ENCODE measurements at regions of chr12 and their contacts with region 1.

Region 1: DNA sequence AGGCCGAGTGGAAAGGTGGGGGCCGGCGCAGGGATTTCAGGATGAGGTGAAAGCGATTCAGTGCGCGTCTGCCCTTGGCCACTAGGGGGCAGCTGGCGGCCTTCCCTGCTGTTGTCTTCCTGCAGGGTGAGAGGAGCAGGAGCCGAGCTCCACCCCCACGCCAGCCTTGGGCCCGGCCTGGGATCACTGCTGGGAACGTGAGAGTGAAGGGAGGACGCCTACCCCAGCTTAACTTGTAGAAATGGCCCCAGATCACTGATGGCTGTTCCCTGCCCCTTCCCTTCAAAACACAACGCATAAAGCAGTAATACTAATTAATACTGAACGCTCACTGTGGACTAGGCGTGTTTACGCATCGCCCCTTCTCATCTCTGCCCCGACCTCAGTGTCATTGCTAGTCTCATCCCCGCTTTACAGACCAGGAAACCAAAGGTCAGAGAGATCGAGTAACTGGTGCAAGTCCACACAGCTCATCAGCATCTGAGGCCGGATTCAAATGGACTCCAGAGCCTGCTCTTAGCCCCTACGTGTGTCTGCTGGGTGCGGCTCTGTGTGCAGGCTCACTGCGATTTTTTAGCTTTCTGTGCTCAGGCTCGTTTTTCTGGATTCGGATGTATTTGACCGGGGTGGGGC is 24.3 kb downstream of the MVK start:
- DNase-seq: peak; percentile 80
- H3K4me3 ChIP-seq: no peak overlapping the region
- H3K27ac ChIP-seq: no peak overlapping the region
- H3K4me1 ChIP-seq: no peaks in the 10 kb centered on the region
- H3K27me3 ChIP-seq: no peaks in the 10 kb centered on the region
- CTCF ChIP-seq: peak; percentile 95 to 97 (median 96)
- POLR2A ChIP-seq: no peak

Region 2: DNA sequence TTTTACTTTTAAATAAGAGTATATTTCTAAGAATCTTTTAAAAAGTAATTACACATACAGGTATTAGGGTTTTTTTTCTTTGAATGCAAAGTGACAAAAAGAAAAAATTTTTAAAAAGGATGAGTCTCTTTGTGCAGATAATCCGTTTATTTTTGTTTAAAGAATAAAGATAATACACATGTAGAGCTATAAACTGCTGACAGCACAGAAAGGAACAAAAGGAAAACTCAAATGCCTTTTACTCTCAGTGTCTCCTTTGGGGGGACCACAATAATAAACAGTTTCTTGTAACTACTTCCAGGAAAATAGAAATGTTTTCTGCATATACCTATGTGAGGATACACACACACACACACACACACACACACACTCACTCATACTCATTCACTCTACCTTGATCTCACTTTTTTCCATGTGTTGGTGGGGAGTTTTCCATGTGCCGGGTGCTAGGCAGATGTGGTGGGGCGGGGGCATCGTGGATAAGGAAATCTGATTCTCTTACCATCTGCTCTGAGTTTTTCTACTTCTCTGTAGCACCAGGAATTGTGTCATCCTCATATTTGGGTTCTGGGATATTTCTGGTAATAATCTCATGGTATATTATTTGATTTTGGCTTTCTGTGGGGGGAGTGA is 178.9 kb before region 1 on chr12:
- intact Hi-C with region 1: no loop called
- DNase-seq: no peak
- H3K4me3 ChIP-seq: no peak overlapping the region
- H3K27ac ChIP-seq: no peak overlapping the region
- H3K4me1 ChIP-seq: no peaks in the 10 kb centered on the region
- H3K27me3 ChIP-seq: no peaks in the 10 kb centered on the region
- CTCF ChIP-seq: no peak
- POLR2A ChIP-seq: no peak

Region 3: GRCh38 chr12:109713187-109713984 is 115.5 kb after region 1 on chr12 and contains the start of gene FAM222A:
- intact Hi-C with region 1: loop called (anchors 10 kb)
- DNase-seq: peak; percentile 96
- H3K4me3 ChIP-seq: peak within 1 kb of the TSS; percentile 48 to 50
- H3K27ac ChIP-seq: peak within 1 kb of the TSS in 1 of 2 donors; percentile 17
- H3K4me1 ChIP-seq: peaks cover 10% of the 10 kb centered on the region
- H3K27me3 ChIP-seq: no peaks in the 10 kb centered on the region
- CTCF ChIP-seq: peak in 2 of 4 experiments; percentile 46 to 52
- POLR2A ChIP-seq: peak; percentile 37
- total RNA-seq, gene FAM222A: 2.0 to 52.3 TPM

Measured in prostate gland (tissue), 2 donors.